ENCODE measurements at regions of chr20 and their contacts with region 1.

Region 1: DNA sequence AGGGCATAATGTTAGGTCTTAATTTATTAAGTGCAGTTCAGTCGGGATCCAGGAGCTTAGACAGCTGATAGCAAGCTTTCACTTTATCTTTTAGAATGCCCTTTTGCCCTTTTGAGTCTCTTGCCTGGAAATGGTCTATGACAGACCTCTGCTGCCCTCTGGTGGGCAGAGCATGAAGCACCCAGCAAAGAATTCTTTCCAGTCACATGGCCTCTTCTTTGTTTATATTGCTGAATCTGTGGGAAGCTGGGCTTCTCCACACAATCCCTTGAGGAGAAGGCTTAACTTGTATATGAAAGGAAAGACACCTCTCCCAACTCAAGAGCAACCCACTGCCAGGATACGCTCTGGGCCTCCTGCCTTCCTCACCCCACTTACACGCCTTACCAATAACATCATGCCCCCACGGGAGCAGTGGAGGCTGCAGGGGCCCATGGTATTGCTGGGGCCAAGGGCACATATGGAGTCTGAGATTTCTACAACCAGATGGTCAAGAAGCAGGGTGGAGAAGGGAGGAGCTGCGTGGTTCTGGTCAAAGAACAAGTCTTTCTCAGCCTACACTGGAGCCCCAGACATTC is 20.4 kb downstream of the WFDC3 start:
- DNase-seq: peak; percentile 77
- ATAC-seq: peak; percentile 87 to 93
- H3K4me3 ChIP-seq: no peak overlapping the region
- H3K27ac ChIP-seq: peak overlapping the region; percentile 43
- H3K4me1 ChIP-seq: peaks cover 12% of the 10 kb centered on the region
- H3K27me3 ChIP-seq: no peaks in the 10 kb centered on the region
- CTCF ChIP-seq: peak; percentile 95

Region 2: GRCh38 chr20:45545754-45546453 is 225.4 kb before region 1 on chr20:
- intact Hi-C with region 1: loop called (anchors 10 kb)
- DNase-seq: no peak
- ATAC-seq: peak; percentile 76 to 81
- H3K4me3 ChIP-seq: no peak overlapping the region
- H3K27ac ChIP-seq: no peak overlapping the region
- H3K4me1 ChIP-seq: no peaks in the 10 kb centered on the region
- H3K27me3 ChIP-seq: peaks cover 3% of the 10 kb centered on the region
- CTCF ChIP-seq: peak; percentile 43

Region 3: DNA sequence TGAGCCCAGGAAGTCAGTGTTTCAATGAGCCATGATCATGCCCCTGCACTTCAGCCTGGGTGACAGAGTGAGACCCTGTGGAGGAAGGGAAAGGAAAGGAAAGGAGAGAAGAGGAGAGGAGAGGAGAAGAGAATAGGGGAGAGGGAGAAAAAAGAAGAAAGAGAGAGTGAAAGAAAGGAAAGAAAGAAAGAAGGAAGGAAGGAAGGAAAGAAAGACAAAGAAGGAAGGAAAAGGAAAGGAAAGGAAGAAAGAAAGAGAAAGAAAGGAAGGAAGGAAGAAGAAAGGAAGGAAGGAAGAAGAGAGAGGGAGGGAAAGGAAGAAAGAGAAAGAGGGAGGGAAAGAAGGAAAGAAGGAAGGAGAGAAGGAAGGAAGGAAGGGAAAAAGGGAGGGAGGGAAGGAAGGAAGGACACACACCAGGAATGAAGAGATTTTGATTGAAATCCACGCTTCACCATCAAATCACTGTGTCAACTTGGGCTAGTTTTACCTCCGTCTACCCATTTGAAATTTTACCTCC is 206.5 kb before region 1 on chr20:
- intact Hi-C with region 1: no loop called
- DNase-seq: no peak
- ATAC-seq: no peak
- H3K4me3 ChIP-seq: no peak overlapping the region
- H3K27ac ChIP-seq: no peak overlapping the region
- H3K4me1 ChIP-seq: no peaks in the 10 kb centered on the region
- H3K27me3 ChIP-seq: no peaks in the 10 kb centered on the region
- CTCF ChIP-seq: no peak

Region 4: DNA sequence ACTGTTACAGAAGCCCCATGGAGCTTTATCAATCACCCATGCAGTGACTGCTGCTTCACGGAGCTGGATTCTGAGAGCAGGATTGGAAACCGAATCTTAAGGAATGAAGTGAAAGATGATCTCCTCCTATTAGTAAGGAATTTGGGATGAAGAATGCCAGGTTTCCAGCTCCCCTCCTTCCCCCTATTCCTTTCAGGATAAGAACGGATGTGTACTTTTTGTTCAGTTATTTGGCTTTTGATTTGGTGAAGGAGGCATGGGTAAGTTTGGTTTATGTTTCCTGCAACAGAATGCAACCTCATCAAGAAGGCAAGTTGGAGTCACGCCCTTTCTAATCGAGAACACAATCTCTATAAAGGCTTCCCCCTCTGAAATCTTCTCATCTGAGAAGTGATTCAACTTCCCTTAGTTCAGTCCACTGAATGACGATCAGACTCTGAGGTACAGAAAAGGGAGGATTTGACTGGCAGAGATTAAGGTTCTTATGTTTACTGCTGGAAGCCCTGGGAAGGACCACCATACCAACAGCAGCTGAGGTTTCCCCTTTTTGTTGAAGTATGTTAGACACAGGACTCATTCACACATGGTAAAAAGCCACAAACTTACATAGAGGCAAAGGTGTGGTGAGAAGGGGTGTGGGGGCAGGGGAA is 629.7 kb after region 1 on chr20:
- intact Hi-C with region 1: no loop called
- DNase-seq: no peak
- ATAC-seq: peak; percentile 26 to 49
- H3K4me3 ChIP-seq: peak overlapping the region; percentile 29
- H3K27ac ChIP-seq: peak overlapping the region; percentile 81
- H3K4me1 ChIP-seq: peaks cover 89% of the 10 kb centered on the region
- H3K27me3 ChIP-seq: no peaks in the 10 kb centered on the region
- CTCF ChIP-seq: no peak